Mammary epithelial cell (primary cell): ENCODE measurements at regions of chr1 and their contacts with region 1.

Region 1: DNA sequence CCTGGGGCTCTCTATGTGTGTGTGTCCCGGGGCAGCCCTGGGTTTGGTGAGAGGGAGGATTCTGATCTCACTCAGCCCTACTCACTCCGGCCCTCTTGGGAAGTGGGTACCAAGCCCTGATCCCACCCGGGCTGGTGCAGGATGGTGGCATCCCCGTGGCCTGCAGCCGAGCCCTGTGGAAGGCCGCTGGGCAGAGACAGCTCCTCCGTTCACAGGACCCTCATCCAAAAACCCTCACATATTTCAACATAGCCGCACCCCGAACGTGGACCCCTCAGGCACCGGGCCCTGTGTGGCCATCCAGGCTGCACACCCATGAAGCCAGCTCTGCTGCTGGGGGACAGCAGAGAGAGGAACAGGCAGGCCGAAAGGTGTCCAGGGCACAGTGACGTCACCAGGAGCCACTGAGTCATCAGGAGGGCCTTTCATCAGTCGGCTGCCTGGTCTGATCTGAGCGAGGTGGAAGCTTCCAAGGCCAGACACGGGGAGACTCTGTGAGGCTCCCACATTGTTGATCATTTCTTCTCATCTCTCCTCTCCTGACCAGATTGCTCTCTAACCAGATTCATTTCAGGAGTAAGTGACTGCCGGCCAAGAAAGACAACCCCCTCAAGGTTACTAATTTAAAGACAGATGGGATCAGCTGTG is 16.2 kb upstream of the GPR157 start:
- DNase-seq: peak; percentile 23
- H3K4me3 ChIP-seq: no peak overlapping the region
- H3K27ac ChIP-seq: no peak overlapping the region
- H3K4me1 ChIP-seq: peaks cover 5% of the 10 kb centered on the region
- H3K27me3 ChIP-seq: no peaks in the 10 kb centered on the region
- CTCF ChIP-seq: no peak

Region 2: DNA sequence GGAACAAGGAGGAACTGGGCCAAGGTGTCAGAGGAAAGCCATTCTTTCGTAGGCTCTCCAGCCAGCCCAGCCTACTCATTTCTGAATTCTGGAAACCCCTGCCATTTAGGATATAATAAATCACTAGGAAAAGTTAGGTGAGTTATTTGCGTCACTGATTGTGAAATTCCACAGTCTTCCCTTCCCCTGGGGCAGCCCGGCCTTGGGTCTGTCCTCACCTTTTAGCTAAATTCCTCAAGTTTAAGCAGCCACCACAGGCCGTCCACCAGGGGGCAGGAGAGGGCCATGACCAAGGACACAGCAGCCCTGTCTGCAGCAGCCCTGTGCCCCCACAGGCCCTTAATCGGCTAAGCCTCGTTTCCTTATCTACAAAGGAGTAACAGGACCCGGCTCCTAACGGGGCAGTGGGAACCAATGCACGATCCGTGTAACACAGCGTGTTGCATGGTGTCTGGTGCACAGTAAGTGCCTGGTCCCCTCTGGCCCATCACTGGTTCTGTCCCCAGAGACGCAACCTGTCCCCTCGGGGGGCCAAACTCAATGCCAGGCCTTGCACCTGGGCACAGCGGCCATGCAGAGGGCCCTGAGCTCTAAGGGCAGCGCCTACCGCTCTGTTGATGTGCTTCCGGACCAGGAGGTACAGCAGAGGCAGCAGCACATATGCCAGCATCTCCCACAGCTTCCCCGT is 34.3 kb before region 1 on chr1:
- CTCF ChIA-PET with region 1: no interaction called
- dilution Hi-C with region 1: no loop called
- in situ Hi-C with region 1: no loop called
- intact Hi-C with region 1: loop called (anchors 2 kb)
- DNase-seq: peak; percentile 97
- H3K4me3 ChIP-seq: no peak overlapping the region
- H3K27ac ChIP-seq: no peak overlapping the region
- H3K4me1 ChIP-seq: peaks cover 13% of the 10 kb centered on the region
- H3K27me3 ChIP-seq: no peaks in the 10 kb centered on the region
- CTCF ChIP-seq: peak; percentile 87 to 93

Region 3: DNA sequence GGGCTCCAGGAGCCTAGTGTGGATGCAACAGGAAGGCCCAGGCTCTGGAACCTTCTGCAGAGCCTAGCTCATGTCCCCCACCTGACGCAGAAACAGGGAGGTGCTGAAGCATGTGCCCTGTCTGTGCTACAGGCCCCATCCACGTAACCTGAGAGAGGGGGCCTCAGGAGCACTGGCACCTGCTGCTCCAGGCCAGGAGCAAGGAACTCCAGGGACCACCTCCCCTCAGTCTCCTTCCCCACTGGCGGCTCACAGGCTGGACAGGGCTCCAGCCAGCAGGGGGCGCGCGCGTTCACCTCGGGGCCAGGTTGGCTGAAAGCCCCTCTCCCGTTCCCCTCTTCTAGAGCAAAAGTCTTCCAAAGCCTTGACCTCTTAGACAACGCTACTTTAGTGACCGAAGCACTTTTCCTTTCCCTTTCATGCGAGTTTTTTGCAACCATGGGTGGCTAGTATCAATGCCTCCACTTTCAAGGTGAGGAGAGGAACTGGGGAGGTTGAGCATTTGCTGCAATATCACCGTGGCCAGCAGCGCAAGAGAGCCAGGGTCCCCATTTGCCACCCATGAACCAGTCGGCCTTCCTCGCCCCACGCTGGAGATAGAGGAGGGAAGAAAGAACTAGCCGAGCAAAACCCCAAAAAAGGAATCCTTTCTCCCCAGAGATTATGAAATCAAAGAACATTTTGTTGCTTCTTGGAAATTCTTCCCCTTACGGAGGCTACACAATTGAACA is 36.2 kb after region 1 on chr1:
- CTCF ChIA-PET with region 1: no interaction called
- dilution Hi-C with region 1: loop called (anchors 5 kb)
- in situ Hi-C with region 1: no loop called
- intact Hi-C with region 1: loop called (anchors 5 kb)
- DNase-seq: peak; percentile 52
- H3K4me3 ChIP-seq: peak overlapping the region; percentile 92 to 98 (median 94)
- H3K27ac ChIP-seq: peak overlapping the region; percentile 91
- H3K4me1 ChIP-seq: peaks cover 27% of the 10 kb centered on the region
- H3K27me3 ChIP-seq: no peaks in the 10 kb centered on the region
- CTCF ChIP-seq: peak; percentile 84 to 96

Region 4: GRCh38 chr1:9201401-9202239 is 56.5 kb after region 1 on chr1:
- CTCF ChIA-PET with region 1: no interaction called
- dilution Hi-C with region 1: no loop called
- in situ Hi-C with region 1: no loop called
- intact Hi-C with region 1: loop called (anchors 1 kb)
- DNase-seq: peak; percentile 41
- H3K4me3 ChIP-seq: peak overlapping the region; percentile 54 to 61 (median 54)
- H3K27ac ChIP-seq: no peak overlapping the region
- H3K4me1 ChIP-seq: peaks cover 54% of the 10 kb centered on the region
- H3K27me3 ChIP-seq: no peaks in the 10 kb centered on the region
- CTCF ChIP-seq: no peak